A549 (cell line): ENCODE measurements at regions of chr10 and their contacts with region 1.

Region 1: GRCh38 chr10:95246579-95247051 is 44.2 kb downstream of the PDLIM1 start:
- DNase-seq: peak; percentile 48 to 80
- ATAC-seq: peak; percentile 66 to 82
- H3K4me3 ChIP-seq: no peak overlapping the region
- H3K27ac ChIP-seq: peak overlapping the region; percentile 20 to 33; a peak in 4 of 6 replicates
- H3K4me1 ChIP-seq: peaks cover 28% of the 10 kb centered on the region
- CTCF ChIP-seq: peak; percentile 92
- EP300 ChIP-seq: no peak
- POLR2A ChIP-seq: no peak
- RAD21 ChIP-seq: peak; percentile 94 to 96

Region 2: GRCh38 chr10:95077556-95077955 is 169.1 kb before region 1 on chr10:
- CTCF ChIA-PET with region 1: no interaction called
- POLR2A ChIA-PET with region 1: no interaction called
- DNase-seq: no peak
- ATAC-seq: no peak
- H3K4me3 ChIP-seq: no peak overlapping the region
- H3K27ac ChIP-seq: no peak overlapping the region
- H3K4me1 ChIP-seq: no peaks in the 10 kb centered on the region
- CTCF ChIP-seq: no peak
- EP300 ChIP-seq: no peak
- POLR2A ChIP-seq: no peak
- RAD21 ChIP-seq: no peak

Region 3: GRCh38 chr10:95196053-95196452 is 50.6 kb before region 1 on chr10:
- CTCF ChIA-PET with region 1: interaction called, 151 read pairs
- POLR2A ChIA-PET with region 1: no interaction called
- DNase-seq: no peak
- ATAC-seq: no peak
- H3K4me3 ChIP-seq: no peak overlapping the region
- H3K27ac ChIP-seq: no peak overlapping the region
- H3K4me1 ChIP-seq: no peaks in the 10 kb centered on the region
- CTCF ChIP-seq: no peak
- EP300 ChIP-seq: no peak
- POLR2A ChIP-seq: no peak
- RAD21 ChIP-seq: no peak

Region 4: GRCh38 chr10:95214793-95215192 is 31.8 kb before region 1 on chr10:
- CTCF ChIA-PET with region 1: interaction called, 64 read pairs
- POLR2A ChIA-PET with region 1: no interaction called
- DNase-seq: peak; percentile 23 to 81
- ATAC-seq: peak; percentile 80 to 93
- H3K4me3 ChIP-seq: no peak overlapping the region
- H3K27ac ChIP-seq: peak overlapping the region; percentile 60 to 79
- H3K4me1 ChIP-seq: peaks cover 43% of the 10 kb centered on the region
- CTCF ChIP-seq: no peak
- EP300 ChIP-seq: no peak
- POLR2A ChIP-seq: no peak
- RAD21 ChIP-seq: no peak

Region 5: GRCh38 chr10:95260397-95260881 is 13.8 kb after region 1 on chr10:
- CTCF ChIA-PET with region 1: interaction called, 30 read pairs
- POLR2A ChIA-PET with region 1: no interaction called
- DNase-seq: peak; percentile 62 to 84
- ATAC-seq: peak; percentile 92
- H3K4me3 ChIP-seq: no peak overlapping the region
- H3K27ac ChIP-seq: peak overlapping the region; percentile 74 to 90
- H3K4me1 ChIP-seq: peaks cover 53% of the 10 kb centered on the region
- CTCF ChIP-seq: no peak
- EP300 ChIP-seq: no peak; a peak in 1 of 5 replicates
- POLR2A ChIP-seq: no peak
- RAD21 ChIP-seq: no peak

Region 6: GRCh38 chr10:95290461-95291364 is 44.1 kb after region 1 on chr10 and contains the start of gene PDLIM1:
- CTCF ChIA-PET with region 1: interaction called, 27 read pairs
- POLR2A ChIA-PET with region 1: interaction called, 4 read pairs
- DNase-seq: peak; percentile 72 to 82
- ATAC-seq: peak; percentile 91 to 94
- H3K4me3 ChIP-seq: peak within 1 kb of the TSS; percentile 91
- H3K27ac ChIP-seq: peak within 1 kb of the TSS; percentile 97 to 98
- H3K4me1 ChIP-seq: peaks cover 35% of the 10 kb centered on the region
- CTCF ChIP-seq: peak; percentile 22; the same call in 1 of the 3 replicates
- EP300 ChIP-seq: no peak
- POLR2A ChIP-seq: peak; percentile 65
- RAD21 ChIP-seq: peak in 1 of 2 experiments; percentile 41; a peak in 2 of 5 replicates
- polyA plus RNA-seq, gene PDLIM1: 92.5 and 132 TPM in 2 replicates

Region 7: DNA sequence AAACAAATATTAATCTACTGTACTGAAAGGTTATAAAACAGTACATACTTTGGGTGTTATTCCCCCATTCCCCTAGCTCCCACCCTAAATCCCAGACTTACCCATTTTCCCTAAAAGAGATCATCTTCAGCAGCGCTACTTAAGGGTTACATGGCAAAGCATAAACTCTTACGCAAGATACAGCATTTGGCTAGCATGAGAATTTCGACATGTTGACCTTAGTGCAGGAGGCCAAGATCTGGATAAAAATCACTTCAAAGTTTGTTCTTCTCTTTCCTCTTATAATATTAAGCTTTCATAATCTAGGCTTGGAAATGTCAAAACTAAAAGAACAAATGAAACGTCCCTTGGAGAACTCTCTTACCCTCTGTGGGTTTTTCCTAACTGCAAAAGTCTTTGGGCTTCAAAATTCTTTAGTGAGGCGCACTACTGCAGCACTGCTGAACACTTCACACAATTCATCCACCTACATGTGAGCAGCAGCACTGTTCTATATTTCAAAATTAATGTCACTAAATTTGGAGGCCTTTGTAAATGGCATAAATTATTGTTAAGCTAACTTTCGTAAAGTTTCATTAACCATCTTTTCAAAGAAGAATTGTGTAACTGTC is 103.7 kb after region 1 on chr10:
- CTCF ChIA-PET with region 1: interaction called, 637 read pairs
- POLR2A ChIA-PET with region 1: no interaction called
- DNase-seq: no peak
- ATAC-seq: no peak
- H3K4me3 ChIP-seq: no peak overlapping the region
- H3K27ac ChIP-seq: peak overlapping the region in 1 of 2 experiments; percentile 49; a peak in 3 of 6 replicates
- H3K4me1 ChIP-seq: peaks cover 32% of the 10 kb centered on the region
- CTCF ChIP-seq: no peak
- EP300 ChIP-seq: no peak
- POLR2A ChIP-seq: no peak
- RAD21 ChIP-seq: no peak